BJ (cell line): ENCODE measurements at regions of chr11 and their contacts with region 1.

Region 1: GRCh38 chr11:65888163-65888814 is at the start of gene FIBP:
- DNase-seq: peak; percentile 84
- H3K4me3 ChIP-seq: peak within 1 kb of the TSS; percentile 78
- H3K27me3 ChIP-seq: no peaks in the 10 kb centered on the region
- CTCF ChIP-seq: peak; percentile 92
- polyA plus RNA-seq, gene FIBP: 136 and 199 TPM in 2 replicates

Region 2: DNA sequence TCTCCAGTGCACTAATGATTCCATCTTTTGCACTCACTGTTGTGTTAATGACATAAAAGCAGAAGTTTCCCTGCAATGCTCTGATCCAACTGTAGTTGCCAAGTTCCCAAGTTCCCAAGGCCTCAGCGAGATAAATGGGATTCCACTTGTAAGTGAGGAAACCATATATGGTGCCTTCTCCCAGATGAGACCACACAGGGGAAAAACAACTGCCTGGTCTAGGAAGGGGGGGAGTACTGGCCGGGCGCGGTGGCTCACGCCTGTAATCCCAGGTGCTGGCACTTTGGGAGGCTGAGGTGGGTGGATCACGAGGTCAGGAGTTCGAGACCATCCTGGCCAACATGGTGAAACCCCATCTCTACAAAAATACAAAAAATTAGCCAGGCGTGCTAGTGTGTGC is 202.3 kb before region 1 on chr11:
- CTCF ChIA-PET with region 1: no interaction called
- POLR2A ChIA-PET with region 1: interaction called, 12 read pairs
- DNase-seq: no peak
- H3K4me3 ChIP-seq: no peak overlapping the region
- H3K27me3 ChIP-seq: peaks cover 9% of the 10 kb centered on the region
- CTCF ChIP-seq: no peak

Region 3: GRCh38 chr11:65720237-65720934 is 167.9 kb before region 1 on chr11 and contains the start of gene RNASEH2C:
- CTCF ChIA-PET with region 1: no interaction called
- POLR2A ChIA-PET with region 1: interaction called, 17 read pairs
- DNase-seq: peak; percentile 30
- H3K4me3 ChIP-seq: peak within 1 kb of the TSS; percentile 60
- H3K27me3 ChIP-seq: no peaks in the 10 kb centered on the region
- CTCF ChIP-seq: no peak
- polyA plus RNA-seq, gene RNASEH2C: 28.0 and 33.9 TPM in 2 replicates

Region 4: GRCh38 chr11:65859200-65859811 is 29.0 kb before region 1 on chr11:
- CTCF ChIA-PET with region 1: interaction called, 44 read pairs
- POLR2A ChIA-PET with region 1: interaction called, 16 read pairs
- DNase-seq: peak; percentile 87
- H3K4me3 ChIP-seq: peak overlapping the region; percentile 93
- H3K27me3 ChIP-seq: no peaks in the 10 kb centered on the region
- CTCF ChIP-seq: peak; percentile 17; the same call in 1 of the 2 replicates

Region 5: DNA sequence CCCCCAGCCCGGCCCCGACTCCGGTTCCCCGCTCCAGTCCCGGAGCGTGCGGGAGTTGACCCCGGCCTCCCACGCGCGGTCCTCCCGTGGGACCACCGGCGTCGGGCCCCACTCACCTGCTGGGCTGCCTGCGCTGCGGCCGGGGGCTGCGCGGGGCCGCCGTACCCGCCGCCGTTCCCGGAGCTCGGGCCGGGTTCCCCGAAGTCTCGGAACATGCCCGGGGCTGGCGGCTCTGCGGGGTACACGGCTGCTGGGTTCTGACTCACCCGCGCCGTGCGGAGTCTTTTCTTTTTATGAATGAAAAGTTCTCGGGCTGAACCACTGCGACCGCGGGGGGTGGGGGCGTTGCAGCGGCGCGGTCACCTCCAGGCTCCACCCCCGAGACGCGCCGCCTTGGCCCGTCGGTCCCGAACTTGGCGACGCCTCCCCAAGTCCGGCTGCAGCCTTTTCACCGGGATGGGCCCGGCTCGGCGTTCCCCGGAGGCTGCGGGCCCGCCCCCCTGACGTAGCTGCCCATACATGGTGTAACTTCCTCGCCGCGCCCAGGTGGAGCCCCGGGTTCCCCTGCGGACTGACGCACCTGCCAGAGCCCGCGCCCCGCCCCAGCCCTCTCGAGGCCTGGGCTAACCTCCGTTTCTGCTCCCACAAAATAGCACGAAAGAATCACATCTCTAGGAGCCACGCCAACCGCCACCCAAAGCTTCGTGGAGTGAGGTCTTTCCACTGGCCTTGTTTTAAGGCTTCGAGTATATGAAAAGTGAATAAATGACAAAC is 12.0 kb after region 1 on chr11 and contains the start of gene FOSL1:
- CTCF ChIA-PET with region 1: interaction called, 130 read pairs
- POLR2A ChIA-PET with region 1: interaction called, 19 read pairs
- DNase-seq: peak; percentile 82
- H3K4me3 ChIP-seq: peak within 1 kb of the TSS; percentile 86
- H3K27me3 ChIP-seq: no peaks in the 10 kb centered on the region
- CTCF ChIP-seq: no peak
- polyA plus RNA-seq, gene FOSL1: 8.2 and 10.3 TPM in 2 replicates

Region 6: DNA sequence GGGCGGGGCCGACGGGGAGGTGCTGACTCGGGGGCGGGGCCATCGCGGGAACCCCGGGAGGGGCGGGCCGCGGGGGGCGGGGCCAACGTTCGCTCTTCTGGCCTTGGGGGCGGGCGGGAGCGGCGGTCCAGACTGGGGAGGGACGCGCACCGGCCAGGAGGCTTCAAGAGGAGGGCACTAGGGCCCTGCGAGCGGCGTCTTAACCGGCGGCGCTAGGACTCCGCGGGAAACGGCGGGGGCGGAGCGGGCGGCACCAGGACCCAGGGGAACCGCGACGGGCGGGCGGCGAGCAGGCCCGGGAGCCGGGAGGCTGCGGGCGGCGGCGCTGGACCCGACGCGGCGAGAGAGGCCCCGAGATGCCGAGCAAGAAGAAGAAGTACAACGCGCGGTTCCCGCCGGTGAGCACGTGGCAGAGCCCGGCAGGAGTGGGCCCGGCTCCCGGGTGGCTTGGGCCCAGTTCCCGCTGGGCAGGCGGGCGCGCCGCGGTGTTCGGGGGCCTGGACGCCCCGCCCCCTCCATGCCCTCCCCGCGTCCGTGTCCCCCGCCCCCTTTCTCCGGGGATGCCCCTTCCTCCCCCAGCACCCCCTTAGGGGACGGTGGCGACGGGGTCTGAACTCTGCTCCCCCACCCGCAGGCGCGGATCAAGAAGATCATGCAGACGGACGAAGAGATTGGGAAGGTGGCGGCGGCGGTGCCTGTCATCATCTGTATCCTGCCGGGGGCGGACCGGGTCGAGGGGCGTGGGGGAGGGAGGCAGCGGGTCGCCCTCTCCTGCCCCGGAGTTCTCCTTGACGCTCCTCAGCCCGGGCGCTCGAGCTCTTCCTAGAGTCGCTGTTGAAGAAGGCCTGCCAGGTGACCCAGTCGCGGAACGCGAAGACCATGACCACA is 31.1 kb after region 1 on chr11 and contains the start of gene DRAP1:
- CTCF ChIA-PET with region 1: interaction called, 60 read pairs
- POLR2A ChIA-PET with region 1: interaction called, 6 read pairs
- DNase-seq: peak; percentile 70
- H3K4me3 ChIP-seq: peak within 1 kb of the TSS; percentile 87
- H3K27me3 ChIP-seq: no peaks in the 10 kb centered on the region
- CTCF ChIP-seq: no peak
- polyA plus RNA-seq, gene DRAP1: 137 and 141 TPM in 2 replicates

Region 7: DNA sequence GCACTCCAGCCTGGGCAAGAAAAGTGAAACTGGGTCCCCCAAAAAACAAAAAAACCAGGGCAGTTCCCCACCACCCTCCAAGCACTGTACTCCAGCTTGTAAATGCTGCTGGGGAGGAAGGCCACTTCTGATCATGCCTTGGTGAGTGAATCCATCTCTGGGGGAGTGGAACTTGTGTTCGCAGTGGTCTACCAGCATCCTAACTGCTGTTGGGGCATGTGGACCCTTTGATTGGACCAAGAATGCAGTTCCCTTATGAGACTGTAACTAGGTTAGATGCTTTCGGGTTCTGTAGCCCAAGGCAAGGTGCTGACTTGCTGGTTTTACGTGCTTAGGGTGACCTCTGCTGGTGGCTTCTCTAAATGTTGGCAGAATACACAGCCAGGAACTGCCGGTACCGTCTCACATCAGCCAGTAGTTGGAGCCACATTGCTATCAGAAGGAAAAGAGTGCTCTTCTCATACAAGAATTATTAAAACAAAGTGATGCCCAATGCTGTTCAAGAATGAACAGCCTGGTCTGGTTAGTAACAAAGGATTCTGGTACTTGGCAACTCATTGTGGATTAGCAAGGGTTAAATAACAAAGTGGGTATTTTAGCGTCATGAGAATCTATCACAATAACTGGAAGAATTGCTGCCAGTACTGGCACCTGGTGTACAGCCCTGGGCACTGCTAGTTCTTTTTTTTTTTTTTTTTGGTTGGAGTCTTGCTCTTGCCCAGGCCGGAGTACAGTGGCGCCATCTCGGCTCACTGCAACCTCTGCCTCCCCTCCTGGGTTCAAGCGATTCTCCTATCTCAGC is 100.7 kb after region 1 on chr11:
- CTCF ChIA-PET with region 1: interaction called, 130 read pairs
- POLR2A ChIA-PET with region 1: interaction called, 6 read pairs
- DNase-seq: peak; percentile 70
- H3K4me3 ChIP-seq: no peak overlapping the region
- H3K27me3 ChIP-seq: no peaks in the 10 kb centered on the region
- CTCF ChIP-seq: peak; percentile 93

Region 8: DNA sequence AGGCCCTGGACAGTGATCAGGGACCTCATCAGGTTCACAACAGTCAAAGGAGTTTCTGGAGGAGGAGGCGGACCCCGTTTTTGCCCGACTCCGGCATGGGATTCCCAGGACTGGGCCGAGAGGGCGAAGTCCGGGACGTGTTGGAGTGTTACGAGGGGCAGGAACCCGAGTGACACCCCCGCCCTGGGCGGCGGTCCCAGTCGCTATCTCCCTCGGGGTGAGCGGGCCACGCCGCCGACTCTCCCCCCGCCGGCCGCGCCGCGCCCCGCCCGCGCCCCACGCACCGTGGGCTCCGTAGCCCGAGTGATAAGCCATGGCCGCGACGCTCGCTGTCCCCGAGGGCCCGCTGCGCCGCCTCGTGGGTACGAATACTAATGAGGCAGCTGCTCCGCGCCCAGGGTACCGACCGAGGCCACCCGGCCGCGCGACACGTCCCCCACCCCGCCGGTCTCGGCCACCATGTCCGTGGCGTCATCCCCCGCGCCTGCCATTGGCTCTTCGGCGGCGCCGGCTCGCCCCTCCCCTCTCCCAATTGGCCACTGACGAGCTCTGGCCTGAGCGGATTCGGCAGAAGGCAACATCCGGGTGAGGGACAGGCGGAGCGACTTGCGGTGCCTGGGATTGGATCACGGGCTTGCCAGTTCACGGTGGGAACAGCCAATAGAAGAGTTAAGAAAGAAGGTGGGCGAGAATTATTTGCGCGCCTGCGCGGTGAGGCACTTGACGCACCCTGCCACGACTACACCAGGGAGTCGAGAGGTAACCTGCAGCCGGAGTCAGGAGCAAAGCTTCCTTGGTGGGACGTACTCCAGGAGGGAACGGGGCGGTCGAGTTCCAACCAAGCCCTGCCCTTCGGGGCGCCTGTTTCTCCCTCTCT is 400.6 kb after region 1 on chr11 and contains the start of gene YIF1A:
- CTCF ChIA-PET with region 1: no interaction called
- POLR2A ChIA-PET with region 1: no interaction called
- DNase-seq: peak; percentile 98
- H3K4me3 ChIP-seq: peak within 1 kb of the TSS; percentile 84
- H3K27me3 ChIP-seq: peaks cover 19% of the 10 kb centered on the region
- CTCF ChIP-seq: no peak
- polyA plus RNA-seq, gene YIF1A: 151 and 228 TPM in 2 replicates